Astrocyte of the cerebellum (primary cell): ENCODE measurements at regions of chr2 and their contacts with region 1.

Region 1: DNA sequence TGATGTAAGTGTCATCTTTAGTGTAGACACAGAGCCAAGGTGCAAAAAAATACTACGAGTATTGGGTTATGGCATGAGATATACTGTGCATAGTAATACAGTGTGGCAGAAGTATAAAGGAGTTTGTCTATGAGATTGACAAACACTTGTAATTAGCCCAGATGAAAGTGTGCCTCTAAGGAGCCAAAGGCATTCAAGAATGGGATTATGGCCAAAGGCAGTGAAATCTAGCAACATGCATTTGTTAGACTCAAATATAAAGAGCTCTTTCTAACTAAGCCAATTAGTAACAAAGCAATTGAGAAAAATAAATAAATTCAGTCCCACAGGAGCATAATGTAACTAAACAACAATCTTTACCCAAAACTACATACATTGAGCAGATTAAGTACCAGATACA is 1761.8 kb downstream of the SUCLG1 start:
- DNase-seq: no peak
- H3K4me3 ChIP-seq: no peak overlapping the region
- CTCF ChIP-seq: no peak

Region 2: DNA sequence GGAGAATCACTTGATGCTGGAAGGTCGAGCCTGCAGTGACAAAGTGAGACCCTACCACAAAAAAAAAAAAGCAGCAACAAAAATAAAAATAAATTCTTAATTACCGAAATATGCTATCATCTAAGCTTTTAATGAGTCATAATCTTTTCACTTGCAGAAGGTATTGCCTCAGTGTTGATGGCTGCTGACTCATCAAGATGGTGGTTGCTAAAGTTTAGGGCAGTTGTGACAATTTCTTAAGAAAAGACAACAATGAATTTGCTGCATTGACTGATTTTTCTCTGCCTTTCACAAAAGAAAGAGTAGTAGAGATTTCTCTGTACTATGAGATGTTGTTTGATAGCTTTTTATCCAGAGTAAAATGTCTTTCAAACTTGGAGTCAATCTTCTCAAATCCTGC is 47.2 kb before region 1 on chr2:
- in situ Hi-C with region 1: no loop called
- DNase-seq: no peak
- H3K4me3 ChIP-seq: no peak overlapping the region
- CTCF ChIP-seq: no peak

Region 3: DNA sequence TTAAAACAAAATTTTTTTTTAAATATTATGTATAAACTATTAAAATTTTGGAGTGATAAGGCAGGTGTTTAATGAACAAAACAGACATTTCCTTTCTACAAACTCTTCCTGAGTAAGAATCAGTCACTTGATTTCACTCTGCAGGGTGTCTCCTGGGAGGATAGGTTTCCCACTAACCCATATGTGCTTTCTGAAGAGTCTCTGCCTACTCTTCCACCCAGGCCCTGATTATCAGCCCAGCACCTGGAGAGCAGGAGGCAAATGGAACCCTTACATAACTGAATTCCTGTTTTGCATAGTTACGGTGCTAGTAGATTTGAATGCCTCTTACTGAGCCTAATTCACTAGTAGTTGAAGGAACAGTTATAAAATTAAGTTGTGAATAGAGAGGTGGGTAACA is 43.3 kb after region 1 on chr2:
- in situ Hi-C with region 1: loop called (anchors 5 kb)
- DNase-seq: no peak
- H3K4me3 ChIP-seq: no peak overlapping the region
- CTCF ChIP-seq: no peak